ENCODE measurements at regions of chr1 and their contacts with region 1.

Region 1: DNA sequence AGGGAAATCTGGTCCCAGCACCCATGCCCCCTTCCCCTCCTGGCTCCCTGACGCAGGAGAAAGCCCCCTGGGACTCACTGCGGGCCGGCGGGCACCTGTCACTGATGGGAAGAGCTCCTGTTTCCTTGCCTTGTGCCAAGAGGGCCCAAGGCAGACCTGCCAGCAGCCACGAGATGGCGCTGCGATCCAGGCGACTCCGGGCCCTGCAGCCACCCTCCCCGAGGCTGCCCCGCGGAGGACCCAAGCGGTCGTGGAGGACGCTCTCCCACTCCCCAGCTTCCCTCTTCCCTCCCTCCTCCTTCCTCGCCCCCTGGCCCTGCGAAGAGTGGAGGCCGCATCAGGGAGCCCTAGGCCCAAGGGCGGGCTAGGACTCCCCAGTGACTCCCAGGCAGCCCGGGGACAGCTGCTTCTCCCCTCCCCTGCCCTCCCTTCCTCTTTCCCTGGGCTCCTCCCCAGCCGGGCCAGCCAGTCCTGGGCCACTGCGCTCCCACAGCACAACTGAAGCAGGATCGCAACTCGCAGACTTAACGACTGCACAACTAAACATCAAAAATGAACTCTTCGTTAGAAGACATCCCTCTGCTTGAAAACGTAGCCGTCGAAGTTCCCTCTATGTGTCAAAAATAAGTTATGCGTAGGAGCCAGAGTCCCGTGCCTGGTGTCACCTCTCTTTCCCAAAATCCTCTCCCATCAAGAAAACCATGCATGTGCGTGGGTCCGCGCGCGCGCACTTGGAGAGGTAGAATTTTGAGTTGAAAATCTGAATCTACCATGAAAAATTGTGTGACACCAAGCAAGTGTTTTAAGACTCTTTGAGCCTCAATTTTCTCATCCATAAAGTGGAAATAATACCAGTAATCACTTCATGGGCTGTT is 34.2 kb downstream of the BATF3 start:
- DNase-seq: peak; percentile 78 to 88
- ATAC-seq: peak; percentile 94 to 97 (median 94)
- H3K4me3 ChIP-seq: peak overlapping the region; percentile 33
- H3K4me3 Mint-ChIP-seq: peak overlapping the region; percentile 74
- H3K27ac ChIP-seq: no peak overlapping the region
- H3K27ac Mint-ChIP-seq: peak overlapping the region in 1 of 2 donors; percentile 57
- H3K4me1 ChIP-seq: peaks cover 26% of the 10 kb centered on the region
- H3K4me1 Mint-ChIP-seq: peaks cover 17 to 20% of the 10 kb centered on the region in 2 donors
- H3K27me3 ChIP-seq: no peaks in the 10 kb centered on the region
- H3K27me3 Mint-ChIP-seq: peaks cover 18 to 29% of the 10 kb centered on the region in 2 donors
- CTCF ChIP-seq: peak; percentile 97

Region 2: GRCh38 chr1:212749821-212750535 is 84.5 kb after region 1 on chr1:
- intact Hi-C with region 1: loop called (anchors 1 kb)
- DNase-seq: peak in 1 of 2 donors; percentile 65
- ATAC-seq: peak; percentile 38 to 64 (median 63)
- H3K4me3 ChIP-seq: no peak overlapping the region
- H3K4me3 Mint-ChIP-seq: no peak overlapping the region
- H3K27ac ChIP-seq: no peak overlapping the region
- H3K27ac Mint-ChIP-seq: peak overlapping the region in 1 of 2 donors; percentile 60
- H3K4me1 ChIP-seq: peaks cover 19% of the 10 kb centered on the region
- H3K4me1 Mint-ChIP-seq: peaks cover 18 to 32% of the 10 kb centered on the region in 2 donors
- H3K27me3 ChIP-seq: no peaks in the 10 kb centered on the region
- H3K27me3 Mint-ChIP-seq: no peaks in the 10 kb centered on the region
- CTCF ChIP-seq: peak; percentile 79

Region 3: DNA sequence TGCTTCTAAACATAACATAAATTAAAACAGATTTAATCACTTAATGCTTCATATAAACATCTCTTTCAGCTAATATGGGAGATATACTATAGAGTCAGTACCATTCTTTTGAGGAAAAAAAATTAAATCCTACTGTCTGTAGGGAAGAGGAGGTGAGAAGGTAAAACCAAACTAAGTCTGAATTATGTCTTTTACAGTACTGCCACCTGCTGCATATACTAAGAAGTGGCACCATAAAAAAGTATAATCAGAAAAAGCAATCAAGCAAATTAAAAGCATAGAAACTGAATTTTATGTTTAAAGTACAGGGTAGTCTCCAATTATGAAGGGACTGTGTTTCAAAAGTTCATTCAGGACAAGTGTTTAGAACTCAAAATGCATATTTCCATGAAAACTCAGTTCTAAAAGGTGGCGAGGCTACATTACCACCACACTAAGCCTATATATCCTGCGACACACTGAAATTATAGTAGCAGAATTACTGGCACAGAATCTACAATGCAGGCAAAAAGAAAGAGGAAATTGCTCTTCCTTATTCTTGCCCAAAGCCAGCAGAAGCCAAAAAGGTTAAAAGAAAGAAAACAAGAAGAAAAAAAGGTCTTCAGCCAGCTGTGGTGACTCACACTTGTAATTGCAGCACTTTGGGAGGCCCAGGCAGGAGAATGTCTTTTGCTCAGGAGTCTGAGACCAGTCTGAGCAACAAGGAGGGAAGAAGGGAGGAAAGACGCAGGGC is 117.1 kb after region 1 on chr1:
- intact Hi-C with region 1: loop called (anchors 1 kb)
- DNase-seq: peak in 1 of 2 donors; percentile 60
- ATAC-seq: peak; percentile 49 to 73 (median 60)
- H3K4me3 ChIP-seq: no peak overlapping the region
- H3K4me3 Mint-ChIP-seq: no peak overlapping the region
- H3K27ac ChIP-seq: no peak overlapping the region
- H3K27ac Mint-ChIP-seq: peak overlapping the region in 1 of 2 donors; percentile 10
- H3K4me1 ChIP-seq: no peaks in the 10 kb centered on the region
- H3K4me1 Mint-ChIP-seq: peaks cover 5 to 11% of the 10 kb centered on the region in 2 donors
- H3K27me3 ChIP-seq: no peaks in the 10 kb centered on the region
- H3K27me3 Mint-ChIP-seq: no peaks in the 10 kb centered on the region
- CTCF ChIP-seq: peak; percentile 73